SK-N-SH (cell line): ENCODE measurements at regions of chr22 and their contacts with region 1.

Region 1: GRCh38 chr22:19730655-19731360 is 7.5 kb downstream of the GP1BB start:
- DNase-seq: peak; percentile 96
- H3K4me3 ChIP-seq: peak overlapping the region; percentile 47 to 65; a peak in 3 of 4 replicates
- H3K27ac ChIP-seq: no peak overlapping the region
- H3K4me1 ChIP-seq: peaks cover 0 to 26% of the 10 kb centered on the region in 2 experiments; a peak in 1 of 4 replicates
- H3K27me3 ChIP-seq: no peaks in the 10 kb centered on the region
- CTCF ChIP-seq: peak; percentile 91
- EP300 ChIP-seq: no peak
- RAD21 ChIP-seq: peak; percentile 97

Region 2: DNA sequence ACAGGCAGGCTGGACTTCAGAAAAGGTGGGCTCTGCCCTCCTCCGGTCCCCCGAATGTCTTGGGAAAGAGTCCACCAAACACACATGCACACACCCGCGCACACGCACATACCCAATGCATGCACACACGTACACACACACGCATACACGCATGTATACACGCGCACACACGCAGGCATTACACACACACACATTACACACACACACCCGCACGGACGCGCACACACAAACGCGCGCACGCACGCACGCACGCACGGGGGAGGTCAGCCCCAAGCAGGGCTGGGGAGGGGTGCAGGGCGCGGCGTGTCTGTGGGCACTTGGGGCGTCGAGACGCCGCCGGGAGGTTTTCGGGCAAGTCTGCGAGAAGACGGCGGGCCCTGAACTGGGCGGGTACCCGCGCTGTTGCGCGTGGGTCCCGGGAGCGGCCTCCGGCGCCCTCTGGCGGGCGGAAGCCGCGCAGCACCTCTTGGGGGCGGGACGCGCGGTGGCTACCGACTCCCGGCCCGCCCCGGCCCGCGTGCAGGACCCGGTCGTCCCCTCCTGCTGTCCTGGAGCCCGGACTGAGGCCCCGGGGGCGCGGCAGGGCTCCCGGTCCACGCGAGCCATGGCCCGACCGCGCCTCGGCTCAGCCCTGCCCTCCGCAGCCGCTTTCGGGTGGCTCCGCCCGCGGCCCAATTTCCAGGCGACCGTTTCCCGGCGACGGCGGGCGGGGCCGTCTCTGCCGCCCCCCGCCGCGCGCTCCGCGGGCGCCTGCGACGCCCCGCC is 12.9 kb before region 1 on chr22:
- CTCF ChIA-PET with region 1: interaction called, 42 read pairs
- POLR2A ChIA-PET with region 1: no interaction called
- DNase-seq: peak; percentile 97
- H3K4me3 ChIP-seq: peak overlapping the region; percentile 62 to 67
- H3K27ac ChIP-seq: peak overlapping the region in 1 of 2 experiments; percentile 56; a peak in 1 of 4 replicates
- H3K4me1 ChIP-seq: peaks cover 0 to 42% of the 10 kb centered on the region in 2 experiments; a peak in 1 of 4 replicates
- H3K27me3 ChIP-seq: no peaks in the 10 kb centered on the region
- CTCF ChIP-seq: peak; percentile 64
- EP300 ChIP-seq: no peak
- RAD21 ChIP-seq: peak; percentile 75

Region 3: DNA sequence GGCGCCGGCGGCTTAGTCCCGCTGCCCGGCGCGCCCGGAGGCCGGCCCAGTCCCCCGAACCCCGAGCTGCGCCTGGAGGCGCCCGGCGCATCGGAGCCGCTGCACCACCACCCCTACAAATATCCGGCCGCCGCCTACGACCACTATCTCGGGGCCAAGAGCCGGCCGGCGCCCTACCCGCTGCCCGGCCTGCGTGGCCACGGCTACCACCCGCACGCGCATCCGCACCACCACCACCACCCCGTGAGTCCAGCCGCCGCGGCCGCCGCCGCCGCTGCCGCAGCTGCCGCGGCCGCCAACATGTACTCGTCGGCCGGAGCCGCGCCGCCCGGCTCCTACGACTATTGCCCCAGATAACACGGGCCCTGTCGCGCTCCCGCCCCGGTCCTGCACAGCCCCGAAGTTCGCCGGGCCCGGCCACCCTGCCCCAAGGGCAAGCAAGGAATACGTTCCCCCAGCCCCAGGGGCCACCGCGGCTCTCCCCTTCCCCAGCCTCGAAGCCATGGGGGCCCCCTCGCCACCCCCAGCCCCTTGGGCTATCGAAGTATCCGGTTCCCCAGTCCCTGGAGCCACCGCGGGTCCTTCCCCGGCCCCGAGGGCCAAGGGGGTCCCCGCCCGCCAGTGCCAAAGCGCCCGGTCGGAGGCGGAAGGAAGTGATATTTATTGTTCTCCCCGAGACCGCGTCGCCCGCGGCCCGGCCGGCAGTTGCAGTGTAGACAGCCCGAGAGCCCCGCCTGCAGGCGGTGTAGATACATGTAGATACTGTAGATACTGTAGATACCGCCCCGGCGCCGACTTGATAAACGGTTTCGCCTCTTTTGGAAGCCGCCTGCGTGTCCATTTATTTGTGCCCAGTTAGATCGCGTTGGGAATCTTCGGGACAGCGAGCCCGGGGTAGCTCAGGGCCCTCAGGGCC is 36.0 kb after region 1 on chr22:
- CTCF ChIA-PET with region 1: interaction called, 21 read pairs
- POLR2A ChIA-PET with region 1: no interaction called
- DNase-seq: peak; percentile 78
- H3K4me3 ChIP-seq: peak overlapping the region in 1 of 2 experiments; percentile 21; a peak in 1 of 4 replicates
- H3K27ac ChIP-seq: no peak overlapping the region
- H3K4me1 ChIP-seq: no peaks in the 10 kb centered on the region; a peak in 1 of 4 replicates
- H3K27me3 ChIP-seq: peaks cover 34% of the 10 kb centered on the region
- CTCF ChIP-seq: peak; percentile 32; the same call in 1 of the 2 replicates
- EP300 ChIP-seq: 0 out of 4 replicates have a peak, but pooled peaks of 1 of the 2 experiments have one; percentile 6
- RAD21 ChIP-seq: no peak

Region 4: GRCh38 chr22:19849711-19850468 is 119.1 kb after region 1 on chr22:
- CTCF ChIA-PET with region 1: interaction called, 22 read pairs
- POLR2A ChIA-PET with region 1: no interaction called
- DNase-seq: no peak
- H3K4me3 ChIP-seq: no peak overlapping the region
- H3K27ac ChIP-seq: no peak overlapping the region
- H3K4me1 ChIP-seq: peaks cover 14 to 23% of the 10 kb centered on the region in 2 experiments; a peak in 3 of 4 replicates
- H3K27me3 ChIP-seq: no peaks in the 10 kb centered on the region
- CTCF ChIP-seq: no peak
- EP300 ChIP-seq: no peak
- RAD21 ChIP-seq: no peak

Region 5: DNA sequence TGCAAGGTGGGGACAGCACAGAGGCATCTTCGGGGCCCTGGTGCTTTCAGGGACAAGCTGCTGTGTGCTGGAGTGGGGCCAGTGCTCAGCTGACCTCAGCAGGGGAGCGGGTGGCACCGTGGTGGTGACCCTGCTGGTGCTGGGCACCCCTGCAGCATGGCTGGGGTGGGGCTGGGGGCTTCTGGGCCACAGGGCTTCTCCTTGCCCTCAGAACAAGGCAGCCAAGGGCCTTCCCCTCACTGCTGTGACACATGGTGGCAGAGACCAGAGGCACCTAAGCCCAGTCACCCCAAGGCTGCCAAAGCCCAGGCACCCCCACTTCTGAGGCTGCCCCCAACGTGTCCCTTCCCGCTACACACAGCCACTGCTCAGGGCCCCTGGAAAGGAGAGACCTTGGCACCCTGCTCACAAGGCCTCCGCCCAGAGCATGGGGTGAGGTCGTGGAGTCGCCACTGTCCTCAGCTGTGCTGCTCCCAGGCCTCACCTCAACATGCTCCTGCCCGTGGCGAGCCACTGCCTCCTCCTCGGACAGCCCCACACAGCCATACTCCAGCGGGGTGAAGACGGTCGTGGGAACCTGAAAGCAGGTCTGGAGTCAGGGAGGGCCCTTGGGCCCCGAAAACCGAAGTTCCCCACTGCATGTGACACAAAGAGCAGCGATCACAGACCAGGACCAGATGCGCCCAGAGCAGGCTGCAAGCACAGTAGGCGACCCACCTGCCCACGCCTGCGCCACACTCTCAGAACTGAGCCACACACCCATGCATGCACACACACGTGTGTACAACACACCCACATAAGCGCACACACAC is 149.1 kb after region 1 on chr22:
- CTCF ChIA-PET with region 1: interaction called, 64 read pairs
- POLR2A ChIA-PET with region 1: interaction called, 4 read pairs
- DNase-seq: peak; percentile 36
- H3K4me3 ChIP-seq: no peak overlapping the region; a peak in 1 of 4 replicates
- H3K27ac ChIP-seq: peak overlapping the region in 1 of 2 experiments; percentile 73; a peak in 2 of 4 replicates
- H3K4me1 ChIP-seq: peaks cover 41 to 46% of the 10 kb centered on the region in 2 experiments; a peak in 3 of 4 replicates
- H3K27me3 ChIP-seq: no peaks in the 10 kb centered on the region
- CTCF ChIP-seq: no peak
- EP300 ChIP-seq: no peak
- RAD21 ChIP-seq: no peak

Region 6: DNA sequence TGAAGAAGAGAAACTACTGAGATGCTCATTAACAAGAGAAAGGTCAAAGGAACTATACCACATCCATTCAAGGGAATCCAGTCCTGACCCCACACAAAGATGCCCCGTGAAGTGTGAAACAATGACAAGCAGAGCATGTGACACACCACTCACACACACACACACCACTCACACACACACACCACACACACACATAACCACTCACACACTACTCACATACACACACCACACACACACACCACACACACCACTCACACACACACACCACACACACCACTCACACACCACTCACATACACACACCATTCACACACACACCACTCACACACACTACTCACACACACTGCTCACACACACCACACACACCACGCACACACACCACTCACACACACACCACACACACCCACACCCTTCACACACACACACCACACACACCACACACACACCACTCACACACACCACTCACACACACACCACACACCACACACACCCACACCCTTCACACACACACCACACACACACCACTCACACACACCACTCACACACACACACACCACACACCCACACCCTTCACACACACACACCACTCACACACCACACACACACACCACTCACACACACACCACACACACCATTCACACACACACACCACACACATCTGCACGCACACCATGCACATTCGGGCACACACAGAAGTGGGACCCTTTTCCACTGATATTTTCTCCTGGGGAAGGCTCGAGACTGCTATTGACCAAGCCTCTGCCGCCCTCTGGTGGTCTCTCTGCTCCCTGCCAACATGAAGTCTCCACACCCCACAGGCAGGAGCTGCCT is 178.8 kb after region 1 on chr22:
- CTCF ChIA-PET with region 1: interaction called, 297 read pairs
- POLR2A ChIA-PET with region 1: interaction called, 10 read pairs
- DNase-seq: peak; percentile 90
- H3K4me3 ChIP-seq: no peak overlapping the region
- H3K27ac ChIP-seq: no peak overlapping the region
- H3K4me1 ChIP-seq: peaks cover 0 to 12% of the 10 kb centered on the region in 2 experiments; a peak in 2 of 4 replicates
- H3K27me3 ChIP-seq: no peaks in the 10 kb centered on the region
- CTCF ChIP-seq: peak; percentile 88
- EP300 ChIP-seq: no peak
- RAD21 ChIP-seq: peak; percentile 98

Region 7: DNA sequence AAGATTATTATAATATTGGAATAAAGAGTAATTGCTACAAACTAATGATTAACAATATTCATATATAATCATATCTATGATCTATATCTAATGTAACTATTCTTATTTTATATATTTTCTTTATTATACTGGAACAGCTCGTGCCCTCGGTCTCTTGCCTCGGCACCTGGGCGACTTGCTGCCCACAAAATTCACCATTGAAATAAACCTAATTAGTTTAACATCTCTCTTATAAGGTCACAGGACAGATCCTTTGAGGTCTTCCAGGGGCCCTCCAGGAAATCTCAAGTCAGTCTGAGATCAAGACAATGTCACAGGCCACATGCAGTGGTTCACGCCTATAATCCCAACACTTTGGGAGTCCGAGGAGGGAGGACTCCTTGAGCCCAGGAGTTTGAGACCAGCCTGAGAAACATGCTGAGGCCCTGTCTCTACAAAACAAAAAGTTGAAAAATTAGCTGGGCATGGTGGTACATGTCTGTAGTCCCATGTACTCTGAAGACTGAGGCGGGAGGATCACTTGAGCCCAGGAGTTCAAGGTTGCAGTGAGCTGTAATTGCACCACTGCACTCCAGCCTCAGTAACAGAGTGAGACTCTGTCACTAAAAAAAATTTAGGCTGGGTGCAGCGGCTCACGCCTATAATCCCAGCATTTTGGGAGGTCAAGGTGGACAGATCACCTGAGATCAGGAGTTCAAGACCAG is 217.4 kb after region 1 on chr22:
- CTCF ChIA-PET with region 1: interaction called, 17 read pairs
- POLR2A ChIA-PET with region 1: no interaction called
- DNase-seq: no peak
- H3K4me3 ChIP-seq: no peak overlapping the region
- H3K27ac ChIP-seq: peak overlapping the region in 1 of 2 experiments; percentile 71; a peak in 2 of 4 replicates
- H3K4me1 ChIP-seq: peaks cover 4 to 25% of the 10 kb centered on the region in 2 experiments; a peak in 3 of 4 replicates
- H3K27me3 ChIP-seq: no peaks in the 10 kb centered on the region
- CTCF ChIP-seq: no peak
- EP300 ChIP-seq: no peak
- RAD21 ChIP-seq: no peak